GM13976 (cell line): ENCODE measurements at regions of chr14 and their contacts with region 1.

Region 1: GRCh38 chr14:77028384-77029231 is at the start of gene IRF2BPL:
- DNase-seq: peak; percentile 98
- CTCF ChIP-seq: no peak

Region 2: GRCh38 chr14:76968621-76969063 is 60.0 kb before region 1 on chr14:
- in situ Hi-C with region 1: loop called (anchors 10 kb)
- DNase-seq: no peak
- CTCF ChIP-seq: no peak

Region 3: DNA sequence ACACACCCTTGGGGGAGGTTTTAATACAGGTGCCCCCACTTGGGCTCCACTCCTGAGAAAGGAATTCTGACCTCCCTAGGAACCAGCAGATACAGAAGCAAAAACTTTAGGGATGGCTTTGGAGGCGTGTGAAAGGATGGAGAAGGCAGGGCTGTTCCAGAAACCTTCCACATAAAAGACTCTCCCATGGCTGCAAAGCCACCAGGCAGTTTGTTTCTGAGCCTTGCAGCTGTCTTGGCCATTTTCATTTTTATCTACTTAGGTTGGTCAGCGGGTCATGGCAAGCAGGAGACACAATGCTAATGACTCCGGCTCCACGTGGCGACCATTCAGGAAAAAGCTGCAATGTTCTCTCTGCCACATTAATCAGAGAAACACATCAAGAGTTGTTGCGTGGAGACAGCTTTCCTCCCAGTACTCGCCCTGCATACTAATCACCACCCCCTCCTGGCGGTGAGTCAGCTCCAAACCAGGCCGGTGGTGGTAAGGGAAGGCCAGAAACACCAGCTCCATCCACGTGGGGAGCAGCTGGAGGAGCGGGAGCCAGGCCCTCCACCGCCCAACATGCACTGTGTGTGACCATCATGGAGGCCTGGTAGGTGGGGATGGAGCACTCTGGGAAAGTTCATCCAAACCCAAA is 30.8 kb after region 1 on chr14:
- in situ Hi-C with region 1: no loop called
- DNase-seq: no peak
- CTCF ChIP-seq: no peak